ENCODE measurements at regions of chr4 and their contacts with region 1.

Region 1: GRCh38 chr4:176778491-176778890 is 14.2 kb downstream of the VEGFC start:
- DNase-seq: peak; percentile 68
- ATAC-seq: peak; percentile 41
- H3K4me3 ChIP-seq: peak overlapping the region; percentile 47; the same call in 1 of the 2 replicates
- H3K27ac ChIP-seq: peak overlapping the region; percentile 79
- H3K4me1 ChIP-seq: peaks cover 82% of the 10 kb centered on the region
- H3K27me3 ChIP-seq: no peaks in the 10 kb centered on the region
- CTCF ChIP-seq: no peak

Region 2: GRCh38 chr4:176195184-176195978 is 583.1 kb before region 1 on chr4 and contains the start of gene SPATA4:
- CTCF ChIA-PET with region 1: no interaction called
- POLR2A ChIA-PET with region 1: no interaction called
- intact Hi-C with region 1: no loop called
- DNase-seq: peak; percentile 76
- ATAC-seq: peak; percentile 68
- H3K4me3 ChIP-seq: peak within 1 kb of the TSS; percentile 82
- H3K27ac ChIP-seq: peak within 1 kb of the TSS; percentile 64
- H3K4me1 ChIP-seq: peaks cover 43% of the 10 kb centered on the region
- H3K27me3 ChIP-seq: no peaks in the 10 kb centered on the region
- CTCF ChIP-seq: no peak
- total RNA-seq, gene SPATA4: 0.15 TPM in 1 of 2 replicates, not detected in the other

Region 3: GRCh38 chr4:176735300-176735699 is 43.2 kb before region 1 on chr4:
- CTCF ChIA-PET with region 1: no interaction called
- POLR2A ChIA-PET with region 1: interaction called, 4 read pairs
- intact Hi-C with region 1: loop called (anchors 5 kb)
- DNase-seq: peak; percentile 70
- ATAC-seq: peak; percentile 67
- H3K4me3 ChIP-seq: no peak overlapping the region
- H3K27ac ChIP-seq: peak overlapping the region; percentile 25; the same call in 1 of the 2 replicates
- H3K4me1 ChIP-seq: peaks cover 15% of the 10 kb centered on the region
- H3K27me3 ChIP-seq: no peaks in the 10 kb centered on the region
- CTCF ChIP-seq: no peak

Measured in PC-3 (cell line).